ENCODE measurements at regions of chr6 and their contacts with region 1.

Region 1: GRCh38 chr6:130602151-130602770 is 224.9 kb upstream of the SMLR1 start:
- DNase-seq: no peak
- H3K4me3 Mint-ChIP-seq: no peak overlapping the region
- H3K27ac Mint-ChIP-seq: no peak overlapping the region
- H3K4me1 Mint-ChIP-seq: no peaks in the 10 kb centered on the region
- H3K27me3 Mint-ChIP-seq: peaks cover 44% of the 10 kb centered on the region
- CTCF ChIP-seq: no peak

Region 2: GRCh38 chr6:130565696-130566095 is 36.6 kb before region 1 on chr6:
- CTCF ChIA-PET with region 1: no interaction called
- intact Hi-C with region 1: loop called (anchors 1 kb)
- DNase-seq: no peak
- H3K4me3 Mint-ChIP-seq: no peak overlapping the region
- H3K27ac Mint-ChIP-seq: no peak overlapping the region
- H3K4me1 Mint-ChIP-seq: no peaks in the 10 kb centered on the region
- H3K27me3 Mint-ChIP-seq: peaks cover 29% of the 10 kb centered on the region
- CTCF ChIP-seq: no peak

Region 3: GRCh38 chr6:130632277-130632676 is 30.0 kb after region 1 on chr6:
- CTCF ChIA-PET with region 1: no interaction called
- intact Hi-C with region 1: no loop called
- DNase-seq: no peak
- H3K4me3 Mint-ChIP-seq: no peak overlapping the region
- H3K27ac Mint-ChIP-seq: no peak overlapping the region
- H3K4me1 Mint-ChIP-seq: no peaks in the 10 kb centered on the region
- H3K27me3 Mint-ChIP-seq: no peaks in the 10 kb centered on the region
- CTCF ChIP-seq: no peak

Region 4: GRCh38 chr6:131545317-131545716 is 943.1 kb after region 1 on chr6:
- CTCF ChIA-PET with region 1: no interaction called
- intact Hi-C with region 1: no loop called
- DNase-seq: no peak
- H3K4me3 Mint-ChIP-seq: no peak overlapping the region
- H3K27ac Mint-ChIP-seq: no peak overlapping the region
- H3K4me1 Mint-ChIP-seq: no peaks in the 10 kb centered on the region
- H3K27me3 Mint-ChIP-seq: peaks cover 43% of the 10 kb centered on the region
- CTCF ChIP-seq: no peak

Measured in Calu3 (cell line).